Gastrocnemius medialis (tissue), 4 donors: ENCODE measurements at regions of chr11 and their contacts with region 1.

Region 1: DNA sequence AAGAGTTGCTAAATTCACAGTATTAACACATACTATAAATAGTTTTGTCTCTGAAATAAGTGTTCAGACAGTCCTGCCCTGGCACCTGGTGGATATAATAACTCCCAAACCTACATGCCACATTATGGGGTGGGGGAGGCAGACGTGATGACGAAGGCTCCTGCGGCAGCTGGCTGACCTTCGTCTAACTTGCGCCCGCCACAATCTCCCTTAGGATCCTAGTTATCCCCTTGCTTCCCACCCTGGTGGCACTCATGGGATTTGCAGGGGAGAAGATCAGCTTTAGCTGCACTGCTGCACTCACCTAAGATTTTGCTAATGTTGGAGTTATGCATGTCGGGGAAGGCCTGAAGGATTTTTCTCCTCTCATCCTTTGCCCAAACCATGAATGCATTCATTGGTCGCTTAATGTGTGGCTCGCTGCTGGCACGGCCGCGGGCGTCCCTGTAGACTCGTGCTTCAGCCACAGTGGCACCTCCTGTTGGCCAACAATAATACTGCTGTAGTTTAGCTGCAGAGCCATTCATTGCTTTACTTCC is 367.6 kb downstream of the SOX6 start:
- DNase-seq: peak in 1 of 2 donors; percentile 36
- ATAC-seq: peak; percentile 86 to 91
- H3K4me3 ChIP-seq: no peak overlapping the region
- H3K27ac ChIP-seq: peak overlapping the region in 1 of 4 donors; percentile 23
- H3K4me1 ChIP-seq: peaks cover 23 to 28% of the 10 kb centered on the region in 2 donors
- H3K27me3 ChIP-seq: no peaks in the 10 kb centered on the region
- CTCF ChIP-seq: peak; percentile 40 to 64 (median 46)
- POLR2A ChIP-seq: no peak

Region 2: GRCh38 chr11:15852179-15852578 is 136.6 kb before region 1 on chr11:
- in situ Hi-C with region 1: no loop called
- intact Hi-C with region 1: loop called (anchors 1 kb)
- DNase-seq: peak; percentile 6 to 33
- ATAC-seq: peak in 1 of 2 donors; percentile 52
- H3K4me3 ChIP-seq: no peak overlapping the region
- H3K27ac ChIP-seq: no peak overlapping the region
- H3K4me1 ChIP-seq: peaks cover 7 to 13% of the 10 kb centered on the region in 2 donors
- H3K27me3 ChIP-seq: no peaks in the 10 kb centered on the region
- CTCF ChIP-seq: peak; percentile 34 to 65 (median 52)
- POLR2A ChIP-seq: no peak

Region 3: DNA sequence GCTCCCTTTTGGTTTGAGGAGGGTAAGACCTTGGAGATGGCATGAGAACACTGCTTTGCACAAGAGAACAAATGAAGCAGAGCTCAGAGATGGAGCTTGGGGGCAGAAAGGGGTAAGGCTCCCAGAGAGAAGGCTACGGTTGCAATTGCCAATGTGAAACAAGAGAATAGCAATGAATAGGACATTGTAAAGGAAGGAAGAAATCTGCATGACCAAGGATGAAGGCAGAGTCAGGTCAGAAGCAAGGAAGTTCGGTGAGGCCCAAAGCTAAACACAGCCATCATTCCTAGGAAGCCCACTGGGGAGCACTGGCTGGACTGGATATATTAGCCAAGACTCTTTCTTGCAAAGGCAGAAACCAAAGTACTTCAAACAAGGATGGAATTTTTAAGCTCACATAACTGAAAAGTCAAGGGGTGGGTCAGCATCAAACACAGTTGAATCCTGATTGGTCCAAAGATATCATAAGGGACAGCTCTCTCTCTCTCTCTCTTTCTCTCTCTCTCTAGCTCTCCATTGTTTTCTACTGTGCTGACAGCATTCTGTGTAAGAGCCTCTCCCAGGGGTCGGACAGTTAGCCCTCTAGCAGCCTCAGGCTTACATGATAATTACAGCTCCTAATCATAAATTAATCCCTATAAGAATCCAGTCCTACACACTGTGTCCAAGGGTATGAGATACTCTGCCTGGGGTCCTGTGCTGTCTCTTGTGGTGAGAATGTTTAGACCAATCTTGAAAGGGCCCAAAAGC is 116.7 kb before region 1 on chr11:
- in situ Hi-C with region 1: no loop called
- intact Hi-C with region 1: no loop called
- DNase-seq: no peak
- ATAC-seq: no peak
- H3K4me3 ChIP-seq: no peak overlapping the region
- H3K27ac ChIP-seq: no peak overlapping the region
- H3K4me1 ChIP-seq: no peaks in the 10 kb centered on the region
- H3K27me3 ChIP-seq: no peaks in the 10 kb centered on the region
- CTCF ChIP-seq: no peak
- POLR2A ChIP-seq: no peak

Region 4: DNA sequence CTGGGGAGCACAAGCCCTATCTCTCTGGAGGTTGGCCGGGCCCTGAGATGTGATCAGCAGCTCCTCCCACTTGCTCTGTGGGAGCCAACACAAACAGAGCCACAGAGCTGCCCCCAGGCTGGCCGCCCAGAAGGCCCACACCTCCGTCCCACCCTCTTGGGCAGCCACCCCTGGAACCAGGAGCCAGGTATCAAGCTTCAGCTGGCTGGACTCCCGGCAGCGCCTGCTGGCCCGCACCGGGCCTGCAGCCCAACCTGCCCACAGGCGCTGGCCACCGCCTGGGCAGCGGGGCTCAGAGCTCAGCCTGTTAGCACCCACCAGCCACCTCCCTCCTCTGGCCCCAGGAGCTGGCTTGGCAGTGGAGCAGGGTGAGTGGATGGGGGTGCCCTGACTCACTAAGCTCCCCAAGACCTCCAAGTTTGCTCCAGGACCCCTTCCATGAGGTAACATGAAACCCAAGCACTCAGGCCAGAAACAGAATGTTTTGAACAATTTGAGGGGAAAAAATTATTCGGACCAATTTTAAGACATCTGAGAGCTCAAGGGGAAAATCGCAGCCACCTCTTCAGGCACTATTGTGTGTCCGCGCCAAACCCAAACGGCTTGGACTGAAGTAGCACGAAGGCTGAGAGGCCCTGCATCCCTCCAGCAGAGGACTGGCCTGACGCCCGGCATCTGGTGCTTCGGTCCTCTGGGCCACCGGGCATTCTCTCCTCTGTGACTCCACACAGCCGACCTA is 83.2 kb before region 1 on chr11:
- in situ Hi-C with region 1: no loop called
- intact Hi-C with region 1: no loop called
- DNase-seq: peak in 1 of 2 donors; percentile 44
- ATAC-seq: peak; percentile 52 to 55
- H3K4me3 ChIP-seq: no peak overlapping the region
- H3K27ac ChIP-seq: peak overlapping the region in 1 of 4 donors; percentile 8
- H3K4me1 ChIP-seq: no peaks in the 10 kb centered on the region
- H3K27me3 ChIP-seq: no peaks in the 10 kb centered on the region
- CTCF ChIP-seq: peak in 1 of 5 experiments; percentile 30
- POLR2A ChIP-seq: no peak

Region 5: GRCh38 chr11:15941201-15941770 is 47.5 kb before region 1 on chr11:
- in situ Hi-C with region 1: no loop called
- intact Hi-C with region 1: loop called (anchors 1 kb)
- DNase-seq: peak in 1 of 2 donors; percentile 33
- ATAC-seq: peak; percentile 68 to 80
- H3K4me3 ChIP-seq: peak overlapping the region in 3 of 4 donors; percentile 9 to 45 (median 44)
- H3K27ac ChIP-seq: no peak overlapping the region
- H3K4me1 ChIP-seq: peaks cover 0 to 5% of the 10 kb centered on the region in 2 donors
- H3K27me3 ChIP-seq: no peaks in the 10 kb centered on the region
- CTCF ChIP-seq: peak; percentile 86 to 96 (median 95)
- POLR2A ChIP-seq: no peak